K562 (cell line): ENCODE measurements at regions of chr21 and their contacts with region 1.

Region 1: GRCh38 chr21:35940074-35940927 is 120.0 kb downstream of the SETD4 start:
- DNase-seq: peak in 3 of 4 experiments; percentile 17 to 70 (median 52)
- ATAC-seq: peak; percentile 94
- H3K4me3 ChIP-seq: no peak overlapping the region
- H3K27ac ChIP-seq: no peak overlapping the region
- H3K4me1 ChIP-seq: peaks cover 0 to under 1% of the 10 kb centered on the region in 2 experiments; a peak in 2 of 5 replicates
- H3K27me3 ChIP-seq: peaks cover 16 to 20% of the 10 kb centered on the region in 2 experiments
- CTCF ChIP-seq: peak; percentile 61 to 85 (median 76)
- EP300 ChIP-seq: no peak
- POLR2A ChIP-seq: no peak
- RAD21 ChIP-seq: peak; percentile 90 to 94

Region 2: GRCh38 chr21:35861661-35862060 is 78.6 kb before region 1 on chr21:
- CTCF ChIA-PET with region 1: no interaction called
- POLR2A ChIA-PET with region 1: no interaction called
- in situ Hi-C with region 1: no loop called
- intact Hi-C with region 1: no loop called
- DNase-seq: no peak
- ATAC-seq: no peak
- H3K4me3 ChIP-seq: no peak overlapping the region
- H3K27ac ChIP-seq: no peak overlapping the region
- H3K4me1 ChIP-seq: no peaks in the 10 kb centered on the region
- H3K27me3 ChIP-seq: peaks cover 0 to 6% of the 10 kb centered on the region in 2 experiments; a peak in 1 of 5 replicates
- CTCF ChIP-seq: no peak
- EP300 ChIP-seq: no peak
- POLR2A ChIP-seq: no peak
- RAD21 ChIP-seq: no peak

Region 3: GRCh38 chr21:36015045-36015444 is 74.7 kb after region 1 on chr21:
- CTCF ChIA-PET with region 1: no interaction called
- POLR2A ChIA-PET with region 1: no interaction called
- in situ Hi-C with region 1: no loop called
- intact Hi-C with region 1: no loop called
- DNase-seq: no peak
- ATAC-seq: no peak
- H3K4me3 ChIP-seq: no peak overlapping the region
- H3K27ac ChIP-seq: no peak overlapping the region
- H3K4me1 ChIP-seq: no peaks in the 10 kb centered on the region
- H3K27me3 ChIP-seq: peaks cover 37 to 39% of the 10 kb centered on the region in 2 experiments
- CTCF ChIP-seq: no peak
- EP300 ChIP-seq: no peak
- POLR2A ChIP-seq: no peak
- RAD21 ChIP-seq: no peak

Region 4: GRCh38 chr21:36113647-36114428 is 173.5 kb after region 1 on chr21:
- CTCF ChIA-PET with region 1: no interaction called
- POLR2A ChIA-PET with region 1: no interaction called
- in situ Hi-C with region 1: no loop called
- intact Hi-C with region 1: loop called (anchors 10 kb)
- DNase-seq: no peak
- ATAC-seq: no peak
- H3K4me3 ChIP-seq: no peak overlapping the region
- H3K27ac ChIP-seq: no peak overlapping the region
- H3K4me1 ChIP-seq: peaks cover 0 to 6% of the 10 kb centered on the region in 2 experiments; a peak in 1 of 5 replicates
- H3K27me3 ChIP-seq: peaks cover 0 to 3% of the 10 kb centered on the region in 2 experiments; a peak in 1 of 5 replicates
- CTCF ChIP-seq: no peak
- EP300 ChIP-seq: no peak
- POLR2A ChIP-seq: no peak
- RAD21 ChIP-seq: no peak